ENCODE measurements at regions of chr10 and their contacts with region 1.

Region 1: GRCh38 chr10:13787015-13787421 is 200.3 kb downstream of the PRPF18 start:
- DNase-seq: peak; percentile 94
- H3K4me3 ChIP-seq: no peak overlapping the region
- H3K27ac ChIP-seq: peak overlapping the region; percentile 96
- H3K4me1 ChIP-seq: peaks cover 57% of the 10 kb centered on the region
- H3K27me3 ChIP-seq: no peaks in the 10 kb centered on the region
- CTCF ChIP-seq: no peak
- POLR2A ChIP-seq: peak; percentile 48

Region 2: GRCh38 chr10:13831711-13832141 is 44.7 kb after region 1 on chr10:
- CTCF ChIA-PET with region 1: interaction called, 4 read pairs
- POLR2A ChIA-PET with region 1: no interaction called
- dilution Hi-C with region 1: no loop called
- intact Hi-C with region 1: loop called (anchors 1 kb)
- DNase-seq: peak; percentile 76
- H3K4me3 ChIP-seq: no peak overlapping the region
- H3K27ac ChIP-seq: peak overlapping the region; percentile 75
- H3K4me1 ChIP-seq: peaks cover 42% of the 10 kb centered on the region
- H3K27me3 ChIP-seq: no peaks in the 10 kb centered on the region
- CTCF ChIP-seq: no peak
- POLR2A ChIP-seq: no peak

Region 3: DNA sequence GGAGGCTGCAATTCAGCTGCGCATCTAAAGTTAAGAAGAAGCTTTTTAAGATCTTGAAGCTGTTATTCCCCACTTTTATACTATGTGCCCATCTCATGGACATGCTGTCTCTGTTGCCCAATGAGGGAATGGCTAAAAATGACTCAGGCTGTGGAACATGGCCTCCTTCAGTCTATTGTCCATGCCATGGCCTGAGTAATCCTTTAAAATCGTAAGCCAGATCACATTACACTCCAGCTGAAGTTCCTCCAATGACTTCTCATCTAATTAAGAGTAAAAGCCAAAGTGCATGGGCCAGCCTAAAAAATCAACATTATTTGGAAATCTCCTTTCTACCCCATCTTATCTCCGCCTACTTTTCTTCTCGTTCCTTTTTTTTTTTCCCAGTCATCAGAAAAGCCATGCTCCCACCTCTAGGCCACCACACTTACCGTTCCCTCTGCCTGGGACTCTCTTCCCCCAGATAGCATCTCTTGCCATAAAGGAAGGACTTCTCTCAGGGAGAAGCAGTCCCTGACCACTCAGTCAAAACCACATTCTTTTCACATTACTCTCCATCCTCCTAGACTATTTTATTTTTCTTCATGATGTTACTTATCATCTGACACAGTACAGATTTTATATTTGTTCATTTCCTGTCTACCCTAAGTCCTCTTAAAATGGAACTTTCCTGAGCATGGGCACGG is 137.2 kb after region 1 on chr10:
- CTCF ChIA-PET with region 1: no interaction called
- POLR2A ChIA-PET with region 1: no interaction called
- dilution Hi-C with region 1: no loop called
- intact Hi-C with region 1: loop called (anchors 1 kb)
- DNase-seq: peak; percentile 74
- H3K4me3 ChIP-seq: no peak overlapping the region
- H3K27ac ChIP-seq: peak overlapping the region; percentile 87
- H3K4me1 ChIP-seq: peaks cover 24% of the 10 kb centered on the region
- H3K27me3 ChIP-seq: no peaks in the 10 kb centered on the region
- CTCF ChIP-seq: no peak
- POLR2A ChIP-seq: peak; percentile 45

Region 4: DNA sequence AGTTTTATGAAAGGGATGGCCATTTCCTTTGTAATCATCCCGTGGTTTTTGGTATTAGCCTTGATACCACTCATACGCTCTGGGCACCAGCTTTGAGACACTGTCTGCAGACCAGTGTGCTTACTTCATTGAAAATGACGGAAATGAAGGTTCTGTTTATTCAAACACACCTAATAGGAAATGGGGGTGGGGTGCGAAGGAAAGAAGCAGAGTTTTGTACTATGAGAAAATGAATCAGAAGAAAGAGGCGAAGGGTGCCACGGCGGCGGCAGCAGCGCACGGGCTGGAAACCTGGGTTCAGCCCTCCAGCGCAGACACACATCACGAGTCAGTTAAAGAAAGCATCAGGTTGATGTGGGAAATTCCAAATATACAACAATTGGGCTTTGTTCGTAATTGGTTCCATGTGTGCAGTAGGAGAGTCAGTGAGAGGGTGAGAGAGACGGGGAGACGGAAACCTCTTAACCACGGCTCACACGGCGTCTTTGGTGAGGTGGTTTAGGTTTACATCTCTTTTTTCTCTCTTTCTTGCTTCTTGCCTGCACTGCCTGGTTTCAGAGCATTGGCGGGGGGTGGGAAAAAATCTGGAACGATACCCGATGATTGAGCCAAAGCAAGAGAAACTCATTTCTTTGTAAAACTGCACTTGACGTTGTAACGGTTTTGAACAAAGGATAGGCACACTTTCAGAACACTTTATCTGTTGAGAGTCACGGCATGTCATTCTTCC is 222.5 kb after region 1 on chr10:
- CTCF ChIA-PET with region 1: no interaction called
- POLR2A ChIA-PET with region 1: no interaction called
- dilution Hi-C with region 1: no loop called
- intact Hi-C with region 1: loop called (anchors 1 kb)
- DNase-seq: peak; percentile 47
- H3K4me3 ChIP-seq: peak overlapping the region; percentile 1 to 79 (median 26)
- H3K27ac ChIP-seq: peak overlapping the region; percentile 93
- H3K4me1 ChIP-seq: peaks cover 39% of the 10 kb centered on the region
- H3K27me3 ChIP-seq: no peaks in the 10 kb centered on the region
- CTCF ChIP-seq: no peak
- POLR2A ChIP-seq: no peak

Region 5: DNA sequence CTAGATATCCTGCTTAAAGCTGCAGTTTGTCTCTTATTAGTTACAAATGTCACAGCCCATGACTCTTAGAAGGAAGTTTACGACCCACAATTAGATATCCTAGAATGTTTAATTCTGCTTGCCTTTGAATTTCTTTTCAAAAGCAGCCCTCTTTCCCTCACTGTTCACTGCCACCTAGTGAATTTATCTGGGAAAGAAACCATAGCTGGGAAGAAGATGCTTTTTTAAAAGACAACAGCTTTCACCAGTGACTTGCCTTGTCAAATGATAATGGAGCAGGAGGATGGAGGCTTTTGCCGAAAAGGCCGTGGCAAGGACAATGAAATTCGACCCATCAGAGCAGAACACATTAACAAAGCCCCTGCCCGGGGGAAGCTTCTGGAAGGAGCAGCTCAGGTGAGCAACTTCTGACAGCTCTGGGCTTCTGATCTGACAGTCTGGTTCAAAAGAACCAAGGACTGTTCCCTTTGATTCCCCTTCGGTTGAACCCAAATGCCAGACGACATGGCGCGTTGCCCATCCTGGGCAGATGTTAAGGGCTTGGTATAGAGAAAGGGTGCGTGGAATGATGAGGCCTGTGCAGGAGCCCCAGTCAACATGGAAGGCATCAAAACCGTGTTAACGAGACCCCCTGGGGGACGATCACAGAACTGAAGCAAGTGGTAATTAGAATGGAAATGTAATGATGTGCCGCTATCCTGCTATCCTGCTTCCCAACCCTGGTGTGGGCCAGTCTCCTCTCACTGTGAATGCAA is 306.9 kb after region 1 on chr10:
- CTCF ChIA-PET with region 1: interaction called, 65 read pairs
- POLR2A ChIA-PET with region 1: interaction called, 3 read pairs
- dilution Hi-C with region 1: no loop called
- intact Hi-C with region 1: loop called (anchors 1 kb)
- DNase-seq: peak; percentile 68
- H3K4me3 ChIP-seq: no peak overlapping the region
- H3K27ac ChIP-seq: no peak overlapping the region
- H3K4me1 ChIP-seq: peaks cover 6% of the 10 kb centered on the region
- H3K27me3 ChIP-seq: no peaks in the 10 kb centered on the region
- CTCF ChIP-seq: peak; percentile 41 to 45
- POLR2A ChIP-seq: no peak

Region 6: GRCh38 chr10:14282276-14282675 is 495.3 kb after region 1 on chr10:
- CTCF ChIA-PET with region 1: no interaction called
- POLR2A ChIA-PET with region 1: no interaction called
- dilution Hi-C with region 1: no loop called
- intact Hi-C with region 1: no loop called
- DNase-seq: no peak
- H3K4me3 ChIP-seq: no peak overlapping the region
- H3K27ac ChIP-seq: no peak overlapping the region
- H3K4me1 ChIP-seq: no peaks in the 10 kb centered on the region
- H3K27me3 ChIP-seq: peaks cover 10 to 13% of the 10 kb centered on the region in 2 experiments
- CTCF ChIP-seq: no peak
- POLR2A ChIP-seq: no peak

Region 7: DNA sequence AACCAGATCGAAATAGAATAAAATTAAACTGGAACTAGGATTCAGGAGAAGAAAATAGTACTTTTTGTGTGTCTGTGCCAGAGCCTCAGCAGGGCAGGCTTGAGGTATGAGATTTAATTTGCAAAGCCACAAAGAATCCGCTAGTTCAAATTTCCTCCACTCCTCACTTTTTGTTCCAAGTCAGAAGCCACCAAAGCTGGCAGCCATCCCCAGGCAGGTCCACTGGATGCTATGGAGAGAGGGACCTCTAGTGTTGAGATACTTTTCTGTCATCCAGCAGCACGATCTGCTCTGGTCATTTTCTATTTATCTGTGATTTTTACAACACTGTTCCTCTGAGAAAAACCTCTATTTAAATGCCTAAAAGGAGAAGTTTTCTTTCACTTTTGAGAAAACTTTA is 691.6 kb after region 1 on chr10:
- CTCF ChIA-PET with region 1: interaction called, 4 read pairs
- POLR2A ChIA-PET with region 1: no interaction called
- dilution Hi-C with region 1: no loop called
- intact Hi-C with region 1: loop called (anchors 5 kb)
- DNase-seq: peak; percentile 63
- H3K4me3 ChIP-seq: no peak overlapping the region
- H3K27ac ChIP-seq: no peak overlapping the region
- H3K4me1 ChIP-seq: no peaks in the 10 kb centered on the region
- H3K27me3 ChIP-seq: peaks cover 6 to 10% of the 10 kb centered on the region in 2 experiments
- CTCF ChIP-seq: peak; percentile 33 to 56
- POLR2A ChIP-seq: no peak